PC-9 (cell line): ENCODE measurements at regions of chr17 and their contacts with region 1.

Region 1: DNA sequence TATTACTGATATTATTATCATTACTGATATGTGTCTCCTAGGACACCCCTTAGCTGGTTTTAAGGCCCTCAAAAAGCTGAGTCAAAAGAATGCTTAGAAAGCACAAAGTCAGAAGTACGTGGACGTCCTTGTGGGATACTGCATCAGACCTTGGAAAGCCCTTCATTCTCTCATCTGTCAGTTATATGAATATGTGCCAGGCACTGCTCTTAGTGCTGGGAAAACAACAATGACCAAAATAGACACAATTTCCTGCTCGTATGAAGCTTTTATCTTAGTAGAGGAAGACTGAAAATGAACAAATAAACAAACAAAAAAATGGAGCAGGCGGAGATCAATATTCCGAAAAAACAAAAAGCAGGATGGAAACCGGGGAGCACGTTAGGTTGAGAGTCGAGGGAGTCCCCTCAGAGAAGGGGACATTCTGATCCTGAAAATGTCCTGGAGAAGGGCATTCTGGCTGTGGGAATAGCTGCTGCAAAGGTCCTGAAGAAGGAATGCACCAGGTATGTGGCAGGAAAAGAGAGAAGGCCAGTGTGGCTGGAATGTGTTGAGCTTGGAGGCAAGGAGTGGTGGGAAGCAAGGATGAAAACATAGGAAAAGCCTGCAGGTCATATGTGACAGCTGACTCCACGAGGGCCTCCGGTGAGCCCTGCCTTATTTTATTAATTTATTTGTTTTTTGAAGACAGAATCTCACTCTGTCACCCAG is 15.5 kb upstream of the TMEM94 start:
- DNase-seq: no peak
- H3K4me3 ChIP-seq: no peak overlapping the region
- H3K27ac ChIP-seq: no peak overlapping the region
- H3K4me1 ChIP-seq: peaks cover 15% of the 10 kb centered on the region
- H3K27me3 ChIP-seq: no peaks in the 10 kb centered on the region
- CTCF ChIP-seq: no peak

Region 2: DNA sequence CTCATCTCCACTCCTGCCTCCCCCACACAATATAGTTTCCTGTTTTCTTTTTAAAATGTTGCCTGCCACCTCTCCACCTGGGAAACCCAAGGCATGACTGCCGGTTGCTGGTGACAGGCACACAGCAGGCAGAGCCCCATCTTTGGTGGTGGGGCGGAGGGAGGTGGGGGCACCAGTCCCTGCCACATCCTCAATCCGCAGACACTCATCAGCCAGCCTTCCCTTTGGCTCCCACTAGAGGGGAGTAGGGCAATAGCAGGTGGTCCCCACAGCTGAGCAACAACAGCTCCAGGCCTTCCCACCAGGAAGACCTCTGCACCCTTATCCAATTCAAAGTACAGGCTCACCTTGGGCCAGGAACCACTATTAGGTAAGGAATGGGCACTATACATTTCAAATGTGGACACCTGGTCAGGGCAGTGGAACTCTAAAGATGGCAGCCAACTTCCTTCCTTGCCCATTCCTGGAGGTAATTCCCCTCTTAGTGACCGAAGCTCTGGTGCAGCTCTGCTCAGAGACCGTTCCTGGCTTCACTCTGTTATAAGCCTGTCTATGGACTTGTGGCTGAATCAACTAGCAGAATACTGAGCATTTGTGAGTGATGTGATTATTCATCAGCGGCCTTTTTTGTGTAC is 212.1 kb after region 1 on chr17:
- CTCF ChIA-PET with region 1: interaction called, 15 read pairs
- POLR2A ChIA-PET with region 1: no interaction called
- intact Hi-C with region 1: no loop called
- DNase-seq: peak in 1 of 2 experiments; percentile 37
- H3K4me3 ChIP-seq: no peak overlapping the region
- H3K27ac ChIP-seq: no peak overlapping the region
- H3K4me1 ChIP-seq: no peaks in the 10 kb centered on the region
- H3K27me3 ChIP-seq: no peaks in the 10 kb centered on the region
- CTCF ChIP-seq: peak; percentile 72